CD8-positive, alpha-beta T cell (primary cell): ENCODE measurements at regions of chr11 and their contacts with region 1.

Region 1: DNA sequence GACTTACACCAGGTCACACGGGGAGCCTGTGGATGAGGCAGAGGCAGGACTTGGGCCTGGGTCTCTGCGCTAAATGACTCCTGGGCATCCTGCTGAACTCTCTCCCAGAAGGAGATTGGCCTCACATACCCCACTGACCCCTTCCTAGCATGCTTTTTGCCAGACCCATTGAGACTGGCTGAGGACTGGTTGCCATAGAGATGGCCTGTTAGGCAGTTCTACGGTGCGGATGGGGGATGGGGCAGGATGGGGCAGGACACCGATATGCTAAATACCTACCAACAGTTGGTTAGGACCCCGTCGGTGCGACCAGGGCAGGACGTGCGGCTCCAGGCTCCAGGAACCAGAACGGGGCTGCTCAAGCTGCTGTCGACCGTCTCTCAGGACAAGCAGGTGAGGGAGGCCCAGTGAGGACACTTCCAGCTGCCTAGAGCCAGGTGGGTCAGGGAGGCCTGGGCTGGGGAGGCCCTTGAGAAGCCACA is at the start of gene TSGA10IP:
- DNase-seq: no peak
- ATAC-seq: no peak
- H3K4me3 ChIP-seq: no peak within 1 kb of the TSS
- H3K4me3 Mint-ChIP-seq: no peak within 1 kb of the TSS
- H3K27ac ChIP-seq: no peak within 1 kb of the TSS
- H3K27ac Mint-ChIP-seq: no peak within 1 kb of the TSS
- H3K4me1 ChIP-seq: no peaks in the 10 kb centered on the region
- H3K4me1 Mint-ChIP-seq: no peaks in the 10 kb centered on the region
- H3K27me3 ChIP-seq: no peaks in the 10 kb centered on the region
- H3K27me3 Mint-ChIP-seq: no peaks in the 10 kb centered on the region
- CTCF ChIP-seq: no peak
- total RNA-seq, gene TSGA10IP: not detected

Region 2: DNA sequence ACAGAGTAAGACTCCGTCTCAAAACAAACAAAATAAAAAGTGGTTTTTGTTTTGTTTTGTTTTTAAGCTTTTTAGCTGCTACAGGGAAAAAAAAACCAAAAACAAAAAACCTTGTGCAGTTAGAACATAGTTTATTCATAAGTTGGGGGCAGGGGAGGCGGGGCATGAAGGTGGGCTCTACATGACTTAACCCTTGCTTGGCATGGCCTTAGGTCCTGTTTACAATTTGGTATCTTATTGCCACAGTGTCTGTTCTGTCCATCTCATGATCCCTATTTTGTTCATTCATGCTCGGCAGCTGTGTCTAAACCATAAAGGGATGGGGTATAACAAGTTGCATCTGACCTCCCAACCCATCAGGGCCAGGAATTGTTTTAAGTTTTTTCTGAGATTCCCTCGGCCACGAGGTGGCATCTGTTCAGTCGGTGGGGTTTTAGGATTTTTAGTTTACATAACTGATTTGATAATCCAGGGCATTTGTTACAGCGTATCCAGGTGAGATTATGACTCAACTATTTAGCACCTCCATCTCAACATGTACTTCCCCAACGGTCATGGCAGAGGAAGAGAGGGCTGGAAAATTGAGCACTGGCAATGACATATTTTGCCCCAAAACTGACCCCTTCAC is 171.6 kb before region 1 on chr11:
- CTCF ChIA-PET with region 1: no interaction called
- POLR2A ChIA-PET with region 1: no interaction called
- intact Hi-C with region 1: no loop called
- DNase-seq: no peak
- ATAC-seq: no peak
- H3K4me3 ChIP-seq: no peak overlapping the region
- H3K4me3 Mint-ChIP-seq: no peak overlapping the region
- H3K27ac ChIP-seq: no peak overlapping the region
- H3K27ac Mint-ChIP-seq: no peak overlapping the region
- H3K4me1 ChIP-seq: peaks cover 6% of the 10 kb centered on the region
- H3K4me1 Mint-ChIP-seq: peaks cover 7% of the 10 kb centered on the region
- H3K27me3 ChIP-seq: no peaks in the 10 kb centered on the region
- H3K27me3 Mint-ChIP-seq: no peaks in the 10 kb centered on the region
- CTCF ChIP-seq: no peak

Region 3: DNA sequence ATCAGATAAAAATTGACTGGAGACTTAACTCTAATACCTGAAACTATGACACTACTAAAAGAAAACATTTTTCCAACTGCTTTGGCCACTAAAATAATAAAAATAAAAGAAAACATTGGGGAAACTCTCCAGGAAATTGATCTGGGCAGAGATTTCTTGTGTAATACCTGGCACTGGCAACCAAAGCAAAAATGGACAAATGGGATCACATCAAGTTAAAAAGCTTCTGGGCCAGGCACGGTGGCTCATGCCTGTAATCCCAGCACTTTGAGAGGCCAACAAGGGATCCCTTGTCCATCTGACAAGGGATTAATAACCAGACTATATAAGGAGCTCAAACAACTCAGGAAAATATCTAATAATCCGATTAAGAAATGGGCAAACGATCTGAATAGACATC is 258.4 kb after region 1 on chr11:
- CTCF ChIA-PET with region 1: no interaction called
- POLR2A ChIA-PET with region 1: no interaction called
- intact Hi-C with region 1: loop called in 1 of 2 experiments (anchors 5 kb)
- DNase-seq: no peak
- ATAC-seq: no peak
- H3K4me3 ChIP-seq: no peak overlapping the region
- H3K4me3 Mint-ChIP-seq: no peak overlapping the region
- H3K27ac ChIP-seq: no peak overlapping the region
- H3K27ac Mint-ChIP-seq: peak overlapping the region; percentile 68
- H3K4me1 ChIP-seq: no peaks in the 10 kb centered on the region
- H3K4me1 Mint-ChIP-seq: peaks cover 3% of the 10 kb centered on the region
- H3K27me3 ChIP-seq: no peaks in the 10 kb centered on the region
- H3K27me3 Mint-ChIP-seq: no peaks in the 10 kb centered on the region
- CTCF ChIP-seq: no peak